Activated T-helper 1 cell treated with anti-CD3 and anti-CD28 coated beads, Interleukin-12 subunit alpha, Interleukin-12 subunit beta, Interleukin-2, Interleukin-4 antibody, amounts not matched to agents 30 ng/mL and 10 ng/mL and 1 ng/mL, durations not matched to agents 14 hours and 24 hours and 36 hours (primary cell): ENCODE measurements at regions of chr10 and their contacts with region 1.

Region 1: GRCh38 chr10:119080521-119081260 is at the start of gene EIF3A:
- DNase-seq: peak; percentile 94
- H3K4me3 Mint-ChIP-seq: peak within 1 kb of the TSS; percentile 98
- H3K27ac Mint-ChIP-seq: peak within 1 kb of the TSS; percentile 94
- H3K4me1 Mint-ChIP-seq: peaks cover 33% of the 10 kb centered on the region
- H3K27me3 Mint-ChIP-seq: no peaks in the 10 kb centered on the region
- total RNA-seq, gene EIF3A: 181 and 183 TPM in 2 replicates

Region 2: DNA sequence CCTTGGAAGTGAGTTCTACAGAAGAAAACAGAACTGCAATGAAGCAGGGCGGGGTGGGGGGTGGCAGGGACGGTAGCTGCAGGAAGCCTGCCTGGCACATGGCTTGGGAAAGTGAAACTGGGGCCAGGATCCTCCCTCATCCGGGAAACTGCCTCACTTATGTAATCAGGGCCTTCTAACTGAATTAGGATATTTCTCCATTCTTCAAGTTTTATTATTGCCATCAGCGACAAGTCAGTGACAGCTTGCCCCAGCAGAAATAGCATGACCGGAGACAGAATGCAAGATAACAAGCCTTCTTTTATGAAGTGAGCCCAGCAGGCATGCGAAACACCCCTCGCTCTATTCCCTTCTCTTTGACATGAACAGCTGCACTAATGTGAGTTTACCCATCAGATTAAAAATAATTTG is 248.4 kb before region 1 on chr10:
- intact Hi-C with region 1: no loop called
- DNase-seq: no peak
- H3K4me3 Mint-ChIP-seq: no peak overlapping the region
- H3K27ac Mint-ChIP-seq: no peak overlapping the region
- H3K4me1 Mint-ChIP-seq: no peaks in the 10 kb centered on the region
- H3K27me3 Mint-ChIP-seq: no peaks in the 10 kb centered on the region

Region 3: GRCh38 chr10:119061352-119061751 is 19.3 kb before region 1 on chr10:
- intact Hi-C with region 1: loop called (anchors 2 kb)
- DNase-seq: no peak
- H3K4me3 Mint-ChIP-seq: no peak overlapping the region
- H3K27ac Mint-ChIP-seq: no peak overlapping the region
- H3K4me1 Mint-ChIP-seq: peaks cover 14% of the 10 kb centered on the region
- H3K27me3 Mint-ChIP-seq: no peaks in the 10 kb centered on the region

Region 4: GRCh38 chr10:119131512-119132240 is 51.0 kb after region 1 on chr10:
- intact Hi-C with region 1: loop called (anchors 1 kb)
- DNase-seq: peak; percentile 65
- H3K4me3 Mint-ChIP-seq: peak overlapping the region; percentile 80
- H3K27ac Mint-ChIP-seq: peak overlapping the region; percentile 92
- H3K4me1 Mint-ChIP-seq: peaks cover 66% of the 10 kb centered on the region
- H3K27me3 Mint-ChIP-seq: no peaks in the 10 kb centered on the region

Region 5: DNA sequence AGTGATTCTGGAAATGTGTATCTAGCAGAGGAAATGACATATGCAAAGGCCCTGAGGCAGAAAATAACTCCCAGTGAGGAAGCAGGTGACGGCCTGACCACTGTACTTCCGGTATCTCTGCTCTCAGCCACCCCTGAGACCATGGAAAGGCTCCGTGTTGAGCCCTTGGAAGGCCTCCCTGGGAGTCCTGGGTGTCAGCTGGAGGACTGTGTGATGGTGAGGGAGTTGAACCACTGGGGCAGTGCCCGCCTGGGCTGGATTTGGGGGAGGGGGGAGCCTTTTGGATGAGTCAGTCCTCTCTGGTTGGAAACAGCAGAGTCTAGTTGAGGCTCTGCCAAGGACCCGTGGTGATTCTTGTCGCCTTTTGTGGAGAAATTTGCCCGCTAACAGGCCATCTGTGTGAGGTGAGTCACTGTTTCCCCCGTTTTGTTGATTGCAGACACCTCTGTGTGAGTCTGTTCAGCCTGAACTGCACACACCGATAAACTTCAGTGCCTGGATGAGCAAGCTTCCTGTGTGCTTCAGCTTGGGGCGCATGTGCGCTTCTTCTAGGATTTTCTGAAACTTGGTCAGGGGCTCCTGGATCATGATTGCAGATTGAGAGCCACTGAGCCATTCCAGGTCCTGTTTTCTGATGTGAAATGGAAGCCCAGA is 225.3 kb after region 1 on chr10:
- intact Hi-C with region 1: loop called (anchors 5 kb)
- DNase-seq: peak; percentile 82
- H3K4me3 Mint-ChIP-seq: peak overlapping the region; percentile 79
- H3K27ac Mint-ChIP-seq: peak overlapping the region; percentile 100
- H3K4me1 Mint-ChIP-seq: peaks cover 89% of the 10 kb centered on the region
- H3K27me3 Mint-ChIP-seq: peaks cover 4% of the 10 kb centered on the region

Region 6: GRCh38 chr10:119650692-119651513 is 570.2 kb after region 1 on chr10 and contains the start of gene BAG3:
- intact Hi-C with region 1: loop called (anchors 2 kb)
- DNase-seq: peak; percentile 70
- H3K4me3 Mint-ChIP-seq: peak within 1 kb of the TSS; percentile 95
- H3K27ac Mint-ChIP-seq: peak within 1 kb of the TSS; percentile 96
- H3K4me1 Mint-ChIP-seq: peaks cover 50% of the 10 kb centered on the region
- H3K27me3 Mint-ChIP-seq: no peaks in the 10 kb centered on the region
- total RNA-seq, gene BAG3: 30.4 and 30.5 TPM in 2 replicates